Dorsolateral prefrontal cortex (tissue), 120 donors: ENCODE measurements at regions of chr9 and their contacts with region 1.

Region 1: GRCh38 chr9:96126321-96126881 is 175.6 kb downstream of the HSD17B3 start:
- DNase-seq: no peak
- H3K4me3 ChIP-seq: no peak overlapping the region
- H3K27ac ChIP-seq: no peak overlapping the region
- H3K27me3 ChIP-seq: no peaks in the 10 kb centered on the region
- CTCF ChIP-seq: no peak

Region 2: GRCh38 chr9:96209407-96210271 is 83.2 kb after region 1 on chr9:
- intact Hi-C with region 1: loop called in 1 of 2 experiments (anchors 5 kb)
- DNase-seq: no peak
- H3K4me3 ChIP-seq: no peak overlapping the region
- H3K27ac ChIP-seq: no peak overlapping the region
- H3K27me3 ChIP-seq: no peaks in the 10 kb centered on the region
- CTCF ChIP-seq: no peak